K562 (cell line): ENCODE measurements at regions of chr10 and their contacts with region 1.

Region 1: GRCh38 chr10:80382989-80383388 is 25.4 kb upstream of the PRXL2A start:
- DNase-seq: peak in 2 of 4 experiments; percentile 57
- ATAC-seq: peak; percentile 48
- H3K4me3 ChIP-seq: no peak overlapping the region
- H3K27ac ChIP-seq: no peak overlapping the region
- H3K4me1 ChIP-seq: no peaks in the 10 kb centered on the region
- H3K27me3 ChIP-seq: peaks cover 5% of the 10 kb centered on the region in 2 experiments; a peak in 4 of 5 replicates
- CTCF ChIP-seq: peak; percentile 66 to 90 (median 79)
- EP300 ChIP-seq: no peak
- POLR2A ChIP-seq: no peak
- RAD21 ChIP-seq: peak; percentile 82

Region 2: GRCh38 chr10:80196270-80196949 is 186.6 kb before region 1 on chr10:
- CTCF ChIA-PET with region 1: no interaction called
- POLR2A ChIA-PET with region 1: no interaction called
- in situ Hi-C with region 1: no loop called
- intact Hi-C with region 1: no loop called
- DNase-seq: no peak
- ATAC-seq: no peak; the same call in 2 of the 3 replicates
- H3K4me3 ChIP-seq: no peak overlapping the region
- H3K27ac ChIP-seq: no peak overlapping the region
- H3K4me1 ChIP-seq: peaks cover 16 to 20% of the 10 kb centered on the region in 2 experiments
- H3K27me3 ChIP-seq: no peaks in the 10 kb centered on the region
- CTCF ChIP-seq: no peak
- EP300 ChIP-seq: no peak
- POLR2A ChIP-seq: no peak
- RAD21 ChIP-seq: no peak

Region 3: DNA sequence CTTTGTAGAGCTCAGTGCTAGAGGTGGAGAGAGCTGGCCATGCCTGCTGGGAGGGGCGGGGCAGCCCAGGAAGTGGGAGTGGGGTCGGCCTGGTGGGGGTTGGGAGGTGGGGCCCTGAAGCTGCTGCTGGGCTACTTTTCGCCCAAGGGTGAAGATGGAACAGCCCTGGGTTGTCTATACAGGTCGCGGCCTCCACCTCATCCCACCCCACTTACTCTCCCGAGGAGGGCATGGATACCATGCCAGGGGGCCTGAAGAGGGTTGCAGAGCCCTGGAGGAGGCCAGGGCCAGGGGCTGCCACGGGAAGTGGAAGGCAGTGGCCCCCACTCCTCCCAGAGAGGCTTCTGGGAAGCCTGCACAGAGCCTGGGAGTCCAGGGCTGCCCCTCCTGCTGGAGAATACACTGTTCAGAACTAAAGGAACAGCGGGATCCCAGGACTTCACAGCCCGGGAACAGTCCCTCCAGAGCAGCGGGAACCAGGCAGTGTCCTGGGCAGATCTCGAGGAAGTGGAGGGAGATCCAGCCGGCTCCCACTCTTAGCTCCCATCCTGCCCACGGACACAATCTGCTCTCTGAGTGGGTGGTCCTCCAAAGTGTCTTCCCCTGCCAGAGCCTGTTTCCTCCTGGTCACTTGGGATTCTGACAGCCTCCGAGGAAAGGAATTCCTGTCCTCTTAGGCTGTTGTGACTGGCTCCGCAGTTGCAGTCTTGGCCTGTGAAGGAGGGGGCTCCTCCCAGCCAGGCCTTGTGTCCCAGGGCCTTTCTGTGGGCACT is 117.1 kb before region 1 on chr10:
- CTCF ChIA-PET with region 1: no interaction called
- POLR2A ChIA-PET with region 1: no interaction called
- in situ Hi-C with region 1: no loop called
- intact Hi-C with region 1: loop called (anchors 5 kb)
- DNase-seq: no peak
- ATAC-seq: peak; percentile 40
- H3K4me3 ChIP-seq: no peak overlapping the region
- H3K27ac ChIP-seq: no peak overlapping the region
- H3K4me1 ChIP-seq: peaks cover 7 to 10% of the 10 kb centered on the region in 2 experiments; a peak in 4 of 5 replicates
- H3K27me3 ChIP-seq: peaks cover 0 to 21% of the 10 kb centered on the region in 2 experiments
- CTCF ChIP-seq: no peak
- EP300 ChIP-seq: no peak
- POLR2A ChIP-seq: no peak
- RAD21 ChIP-seq: no peak

Region 4: DNA sequence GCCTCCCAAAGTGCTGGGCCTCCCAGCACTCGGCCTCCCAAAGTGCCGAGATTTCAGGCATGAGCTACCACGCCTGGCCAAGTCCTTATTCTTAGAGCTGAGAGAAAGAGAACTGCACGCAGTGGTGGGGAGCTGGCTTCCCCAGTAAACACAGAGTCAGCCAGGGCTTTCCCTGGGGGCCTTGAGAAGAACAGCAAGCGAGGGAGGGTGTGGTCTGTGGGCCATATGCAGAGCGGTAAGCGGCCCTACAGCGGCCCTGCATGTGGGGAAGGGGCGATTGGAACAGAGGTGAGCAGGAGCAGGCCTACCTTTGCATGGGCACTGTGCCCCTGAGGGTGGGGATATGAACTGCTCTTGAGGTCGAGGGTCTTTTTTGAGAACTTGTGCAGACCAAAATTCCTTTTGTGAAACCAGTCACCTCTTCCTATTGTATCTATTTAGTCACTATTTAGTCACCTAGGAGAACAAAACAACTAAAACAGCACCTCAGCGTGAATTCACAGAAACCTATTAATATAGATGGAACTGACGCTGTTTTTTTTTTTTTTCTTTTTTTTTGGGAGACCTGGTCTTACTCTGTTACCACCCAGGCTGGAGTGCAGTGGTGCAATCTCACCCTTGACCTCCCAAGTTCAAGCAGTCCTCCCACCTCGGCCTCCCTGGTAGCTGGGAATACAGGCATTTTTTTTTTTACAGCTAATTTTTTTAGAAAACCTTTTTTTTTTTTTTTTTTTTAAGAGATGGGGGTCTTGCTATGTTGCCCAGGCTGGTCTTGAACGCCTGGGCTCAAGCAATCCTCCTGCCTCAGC is 117.8 kb after region 1 on chr10:
- CTCF ChIA-PET with region 1: interaction called, 14 read pairs
- POLR2A ChIA-PET with region 1: interaction called, 3 read pairs
- in situ Hi-C with region 1: loop called (anchors 10 kb)
- intact Hi-C with region 1: loop called (anchors 1 kb)
- DNase-seq: peak in 2 of 4 experiments; percentile 47 to 64
- ATAC-seq: no peak
- H3K4me3 ChIP-seq: no peak overlapping the region
- H3K27ac ChIP-seq: peak overlapping the region; percentile 29; the same call in 2 of the 3 replicates
- H3K4me1 ChIP-seq: peaks cover 82 to 83% of the 10 kb centered on the region in 2 experiments
- H3K27me3 ChIP-seq: no peaks in the 10 kb centered on the region
- CTCF ChIP-seq: 0 out of 6 replicates have a peak, but pooled peaks of 1 of the 3 experiments have one; percentile 5
- EP300 ChIP-seq: no peak
- POLR2A ChIP-seq: no peak
- RAD21 ChIP-seq: no peak

Region 5: DNA sequence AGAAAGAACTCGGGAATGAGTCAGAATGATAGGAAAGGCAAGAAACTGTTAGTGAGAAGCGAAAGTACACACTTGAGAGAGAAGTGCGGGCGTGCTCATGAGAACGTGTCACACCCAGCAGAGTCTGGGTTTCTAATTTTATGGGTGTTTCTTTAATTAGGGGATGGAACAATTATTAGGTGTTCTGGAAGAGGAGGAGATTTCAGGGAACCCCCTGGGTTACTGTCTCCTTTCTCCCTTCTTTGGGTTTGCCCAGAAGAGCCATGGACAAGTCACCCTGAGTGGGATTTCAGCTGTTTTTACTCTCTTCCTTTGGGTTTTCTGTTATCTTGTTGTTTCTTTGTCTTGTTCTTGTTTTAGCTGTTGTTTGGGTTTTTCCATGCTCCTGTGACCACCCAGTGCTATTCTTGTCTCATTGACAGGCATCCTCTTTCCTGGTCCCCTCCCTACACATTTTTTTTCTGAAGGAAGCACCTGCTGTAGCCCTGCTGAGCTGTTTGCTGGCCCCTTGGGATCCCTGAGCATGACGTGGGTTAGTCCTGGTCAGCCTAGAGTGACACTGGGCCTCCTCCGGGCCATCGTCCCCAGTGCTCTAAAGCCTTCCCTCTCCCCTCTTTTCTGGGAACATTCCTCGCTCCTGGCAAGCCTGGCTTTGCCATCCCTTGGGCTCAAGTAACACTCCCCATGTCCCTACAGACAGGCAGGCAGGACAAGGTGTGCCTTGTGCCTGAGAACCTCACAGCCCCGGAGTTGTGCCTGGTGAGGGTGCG is 158.2 kb after region 1 on chr10:
- CTCF ChIA-PET with region 1: no interaction called
- POLR2A ChIA-PET with region 1: no interaction called
- in situ Hi-C with region 1: no loop called
- intact Hi-C with region 1: no loop called
- DNase-seq: no peak
- ATAC-seq: peak; percentile 12; the same call in 1 of the 3 replicates
- H3K4me3 ChIP-seq: no peak overlapping the region
- H3K27ac ChIP-seq: no peak overlapping the region
- H3K4me1 ChIP-seq: peaks cover 6 to 15% of the 10 kb centered on the region in 2 experiments; a peak in 4 of 5 replicates
- H3K27me3 ChIP-seq: peaks cover 43 to 70% of the 10 kb centered on the region in 2 experiments
- CTCF ChIP-seq: no peak
- EP300 ChIP-seq: no peak
- POLR2A ChIP-seq: no peak
- RAD21 ChIP-seq: no peak

Region 6: GRCh38 chr10:80599424-80599847 is 216.4 kb after region 1 on chr10:
- CTCF ChIA-PET with region 1: no interaction called
- POLR2A ChIA-PET with region 1: interaction called, 3 read pairs
- in situ Hi-C with region 1: no loop called
- intact Hi-C with region 1: loop called (anchors 2 kb)
- DNase-seq: peak; percentile 80 to 87 (median 82)
- ATAC-seq: peak; percentile 95
- H3K4me3 ChIP-seq: no peak overlapping the region
- H3K27ac ChIP-seq: no peak overlapping the region
- H3K4me1 ChIP-seq: peaks cover 0 to 4% of the 10 kb centered on the region in 2 experiments; a peak in 2 of 5 replicates
- H3K27me3 ChIP-seq: peaks cover 9 to 28% of the 10 kb centered on the region in 2 experiments; a peak in 4 of 5 replicates
- CTCF ChIP-seq: peak; percentile 91 to 98 (median 92)
- EP300 ChIP-seq: no peak
- POLR2A ChIP-seq: no peak
- RAD21 ChIP-seq: peak; percentile 47 to 75